ENCODE measurements at regions of chrX and their contacts with region 1.

Region 1: GRCh38 chrX:103533511-103534216 is 14.4 kb upstream of the RAB40A start:
- DNase-seq: peak; percentile 83
- ATAC-seq: peak; percentile 86
- H3K4me3 ChIP-seq: peak overlapping the region; percentile 62
- H3K27ac ChIP-seq: no peak overlapping the region
- H3K4me1 ChIP-seq: peaks cover 5% of the 10 kb centered on the region
- H3K27me3 ChIP-seq: no peaks in the 10 kb centered on the region
- CTCF ChIP-seq: peak; percentile 89

Region 2: DNA sequence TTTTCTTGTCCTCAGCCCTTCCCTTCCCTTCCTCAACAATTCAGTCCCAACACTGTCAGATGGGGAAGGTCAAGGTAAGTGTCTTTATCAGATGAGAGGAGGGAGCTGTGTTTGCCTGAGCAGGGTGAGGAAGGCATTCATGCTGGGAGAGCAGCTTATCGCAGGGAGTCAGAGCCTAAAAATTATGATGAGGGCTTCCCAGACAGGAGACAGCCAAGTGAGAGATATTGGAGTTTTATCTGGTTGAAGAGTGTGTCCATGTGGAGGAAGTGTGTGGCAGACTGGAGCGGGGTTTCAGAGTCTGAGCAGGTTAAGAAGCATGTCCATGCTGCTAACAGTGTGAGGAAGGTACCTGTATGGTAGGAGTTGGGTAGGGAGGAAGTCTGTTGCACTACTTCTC is 300.4 kb before region 1 on chrX:
- CTCF ChIA-PET with region 1: no interaction called
- POLR2A ChIA-PET with region 1: no interaction called
- intact Hi-C with region 1: no loop called
- DNase-seq: no peak
- ATAC-seq: no peak
- H3K4me3 ChIP-seq: no peak overlapping the region
- H3K27ac ChIP-seq: no peak overlapping the region
- H3K4me1 ChIP-seq: no peaks in the 10 kb centered on the region
- H3K27me3 ChIP-seq: 0 out of 2 replicates have a peak, but pooled peaks cover 7% of the 10 kb centered on the region
- CTCF ChIP-seq: no peak

Region 3: GRCh38 chrX:103248553-103248952 is 285.1 kb before region 1 on chrX:
- CTCF ChIA-PET with region 1: no interaction called
- POLR2A ChIA-PET with region 1: no interaction called
- intact Hi-C with region 1: no loop called
- DNase-seq: peak; percentile 54
- ATAC-seq: peak; percentile 35; the same call in 1 of the 2 replicates
- H3K4me3 ChIP-seq: no peak overlapping the region
- H3K27ac ChIP-seq: no peak overlapping the region
- H3K4me1 ChIP-seq: peaks cover under 1% of the 10 kb centered on the region; the same call in 1 of the 2 replicates
- H3K27me3 ChIP-seq: peaks cover 12% of the 10 kb centered on the region; the same call in 1 of the 2 replicates
- CTCF ChIP-seq: peak; percentile 61

Region 4: DNA sequence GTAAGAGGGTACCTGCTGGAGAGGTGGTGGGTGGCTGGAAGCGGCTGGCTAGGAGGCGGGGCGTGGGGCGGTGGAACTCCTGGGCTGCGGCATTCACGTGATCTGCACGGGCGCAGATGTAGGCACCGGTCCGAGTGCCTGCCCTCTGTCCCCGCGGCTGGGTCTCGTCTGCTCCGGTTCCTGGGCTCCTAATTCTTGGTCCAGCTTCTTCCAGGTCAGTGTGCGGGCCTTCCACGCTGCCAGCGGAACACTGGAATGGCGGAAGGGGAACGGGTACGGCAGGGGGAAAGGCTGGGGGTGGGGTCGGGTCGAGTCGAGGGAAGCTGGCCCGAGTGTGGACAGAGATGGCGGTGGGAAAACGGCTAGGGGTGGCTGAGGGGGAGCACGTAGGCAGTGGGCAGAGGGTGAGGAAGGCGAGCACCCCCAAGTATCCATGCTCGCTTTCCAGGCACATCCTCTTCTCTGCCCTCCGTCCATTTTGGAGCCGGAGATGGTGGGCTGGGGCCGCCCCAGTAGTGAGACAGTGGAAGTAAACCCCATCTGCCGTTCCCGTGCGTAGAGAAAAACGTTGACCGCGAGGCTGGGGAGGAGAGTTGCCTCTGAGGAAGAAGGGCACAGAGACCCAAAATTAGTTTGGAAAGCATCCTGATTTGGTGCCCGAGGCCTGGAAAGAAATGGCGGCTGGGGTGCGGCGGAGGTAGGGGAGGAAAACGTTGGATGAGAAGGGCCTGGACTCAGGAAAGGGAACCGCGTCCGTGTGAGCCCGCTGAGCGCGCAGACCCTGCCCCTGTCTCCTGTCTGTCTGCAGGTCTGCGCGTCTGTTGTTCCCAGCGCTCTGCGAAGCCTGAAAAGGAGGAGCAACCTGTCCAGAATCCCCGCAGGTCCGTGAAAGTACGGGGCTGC is 52.0 kb after region 1 on chrX and contains the start of gene TCEAL4:
- CTCF ChIA-PET with region 1: no interaction called
- POLR2A ChIA-PET with region 1: no interaction called
- intact Hi-C with region 1: loop called (anchors 5 kb)
- DNase-seq: peak; percentile 31
- ATAC-seq: peak; percentile 80
- H3K4me3 ChIP-seq: peak within 1 kb of the TSS; percentile 98
- H3K27ac ChIP-seq: peak within 1 kb of the TSS; percentile 53
- H3K4me1 ChIP-seq: peaks cover 6% of the 10 kb centered on the region; the same call in 1 of the 2 replicates
- H3K27me3 ChIP-seq: no peaks in the 10 kb centered on the region
- CTCF ChIP-seq: no peak
- total RNA-seq, gene TCEAL4: 29.8 and 40.8 TPM in 2 replicates

Region 5: DNA sequence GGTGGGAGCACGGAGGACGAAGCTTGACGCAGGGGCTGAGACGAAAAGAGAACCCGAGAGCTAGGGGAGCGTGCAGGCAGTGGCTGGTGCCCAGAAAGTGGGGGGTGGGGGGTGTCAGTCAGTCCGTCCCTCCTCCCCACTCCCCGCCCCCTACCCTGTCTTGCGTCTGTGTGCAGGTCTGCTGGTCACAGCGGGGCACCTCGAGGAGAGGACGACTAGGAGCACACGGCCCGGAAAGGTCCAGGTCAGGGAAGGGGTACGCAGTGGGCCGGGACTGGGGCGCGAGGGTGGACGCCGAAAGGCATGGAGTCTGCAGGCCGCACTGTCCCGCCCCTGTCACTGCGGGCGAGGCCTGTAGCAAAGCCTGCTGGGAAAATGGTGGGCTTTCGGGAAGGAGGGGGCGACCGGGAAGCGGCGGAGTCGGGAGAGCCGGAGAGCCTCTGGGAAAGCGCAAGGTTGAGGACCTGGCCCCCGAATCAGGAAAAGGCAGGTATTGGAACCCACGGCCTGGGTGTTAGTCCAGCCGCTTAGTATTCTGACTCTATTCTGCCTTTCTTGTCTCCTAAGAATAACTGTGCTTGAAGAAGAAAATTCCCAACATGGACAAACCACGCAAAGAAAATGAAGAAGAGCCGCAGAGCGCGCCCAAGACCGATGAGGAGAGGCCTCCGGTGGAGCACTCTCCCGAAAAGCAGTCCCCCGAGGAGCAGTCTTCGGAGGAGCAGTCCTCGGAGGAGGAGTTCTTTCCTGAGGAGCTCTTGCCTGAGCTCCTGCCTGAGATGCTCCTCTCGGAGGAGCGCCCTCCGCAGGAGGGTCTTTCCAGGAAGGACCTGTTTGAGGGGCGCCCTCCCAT is 95.9 kb after region 1 on chrX:
- CTCF ChIA-PET with region 1: interaction called, 6 read pairs
- POLR2A ChIA-PET with region 1: no interaction called
- intact Hi-C with region 1: loop called (anchors 1 kb)
- DNase-seq: peak; percentile 75
- ATAC-seq: peak; percentile 80
- H3K4me3 ChIP-seq: peak overlapping the region; percentile 96
- H3K27ac ChIP-seq: peak overlapping the region; percentile 88
- H3K4me1 ChIP-seq: peaks cover 19% of the 10 kb centered on the region
- H3K27me3 ChIP-seq: no peaks in the 10 kb centered on the region
- CTCF ChIP-seq: peak; percentile 92

Region 6: GRCh38 chrX:103640401-103641155 is 106.9 kb after region 1 on chrX:
- CTCF ChIA-PET with region 1: no interaction called
- POLR2A ChIA-PET with region 1: no interaction called
- intact Hi-C with region 1: no loop called
- DNase-seq: peak; percentile 60
- ATAC-seq: peak; percentile 4
- H3K4me3 ChIP-seq: no peak overlapping the region
- H3K27ac ChIP-seq: peak overlapping the region; percentile 75
- H3K4me1 ChIP-seq: peaks cover 51% of the 10 kb centered on the region
- H3K27me3 ChIP-seq: no peaks in the 10 kb centered on the region
- CTCF ChIP-seq: no peak

Region 7: GRCh38 chrX:103774070-103774642 is 240.5 kb after region 1 on chrX:
- CTCF ChIA-PET with region 1: no interaction called
- POLR2A ChIA-PET with region 1: no interaction called
- intact Hi-C with region 1: loop called (anchors 1 kb)
- DNase-seq: peak; percentile 72
- ATAC-seq: peak; percentile 89
- H3K4me3 ChIP-seq: no peak overlapping the region
- H3K27ac ChIP-seq: no peak overlapping the region
- H3K4me1 ChIP-seq: no peaks in the 10 kb centered on the region
- H3K27me3 ChIP-seq: peaks cover 4% of the 10 kb centered on the region; the same call in 1 of the 2 replicates
- CTCF ChIP-seq: peak; percentile 78

Region 8: GRCh38 chrX:103817502-103817901 is 283.8 kb after region 1 on chrX:
- CTCF ChIA-PET with region 1: no interaction called
- POLR2A ChIA-PET with region 1: no interaction called
- intact Hi-C with region 1: loop called (anchors 1 kb)
- DNase-seq: peak; percentile 87
- ATAC-seq: peak; percentile 60
- H3K4me3 ChIP-seq: no peak overlapping the region
- H3K27ac ChIP-seq: no peak overlapping the region
- H3K4me1 ChIP-seq: no peaks in the 10 kb centered on the region
- H3K27me3 ChIP-seq: no peaks in the 10 kb centered on the region
- CTCF ChIP-seq: peak; percentile 56

Measured in PC-3 (cell line).